WTC11 (cell line): ENCODE measurements at regions of chr16 and their contacts with region 1.

Region 1: DNA sequence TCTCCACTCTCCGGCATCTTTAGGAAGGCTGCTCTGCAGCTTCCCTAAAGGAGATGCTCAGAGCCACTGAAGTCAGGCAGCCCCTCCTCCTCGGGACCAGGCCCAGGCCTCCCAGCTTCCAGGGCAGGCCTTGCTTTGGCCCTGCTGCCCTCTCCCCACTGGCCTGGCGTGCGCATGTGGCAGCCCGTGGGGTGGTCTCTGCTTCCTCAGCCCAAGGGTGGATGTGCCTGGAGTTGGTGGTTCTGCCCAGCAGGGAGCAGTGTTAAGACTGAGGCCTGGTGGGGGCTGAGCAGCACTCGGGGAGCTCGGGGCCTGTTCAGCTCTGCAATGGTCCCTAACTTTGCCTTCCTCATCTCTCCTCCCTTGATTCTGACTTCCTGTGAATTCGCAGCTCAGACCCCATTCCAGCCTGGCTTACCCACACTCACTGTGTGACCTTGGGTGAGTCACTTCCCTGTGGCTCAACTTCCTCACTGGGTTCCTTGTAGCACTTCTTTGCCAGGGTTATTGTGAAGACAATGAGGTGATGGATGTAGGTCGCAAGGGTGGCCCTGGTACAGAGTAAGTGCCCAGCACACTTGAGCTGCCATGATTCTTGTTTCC is 63.2 kb downstream of the NKD1 start:
- DNase-seq: no peak
- ATAC-seq: no peak
- H3K4me3 Mint-ChIP-seq: no peak overlapping the region
- H3K27ac Mint-ChIP-seq: no peak overlapping the region
- H3K4me1 Mint-ChIP-seq: peaks cover 27% of the 10 kb centered on the region
- H3K27me3 Mint-ChIP-seq: no peaks in the 10 kb centered on the region
- CTCF ChIP-seq: no peak

Region 2: GRCh38 chr16:50627419-50627818 is 16.0 kb after region 1 on chr16:
- CTCF ChIA-PET with region 1: interaction called, 27 read pairs
- POLR2A ChIA-PET with region 1: interaction called, 3 read pairs
- DNase-seq: peak; percentile 42
- ATAC-seq: peak; percentile 89
- H3K4me3 Mint-ChIP-seq: no peak overlapping the region
- H3K27ac Mint-ChIP-seq: no peak overlapping the region
- H3K4me1 Mint-ChIP-seq: peaks cover 3% of the 10 kb centered on the region; the same call in 1 of the 2 replicates
- H3K27me3 Mint-ChIP-seq: no peaks in the 10 kb centered on the region
- CTCF ChIP-seq: no peak

Region 3: GRCh38 chr16:50719518-50720337 is 108.3 kb after region 1 on chr16:
- CTCF ChIA-PET with region 1: no interaction called
- POLR2A ChIA-PET with region 1: no interaction called
- DNase-seq: peak; percentile 29
- ATAC-seq: peak; percentile 85
- H3K4me3 Mint-ChIP-seq: no peak overlapping the region
- H3K27ac Mint-ChIP-seq: peak overlapping the region; percentile 41; the same call in 1 of the 2 replicates
- H3K4me1 Mint-ChIP-seq: peaks cover 12% of the 10 kb centered on the region
- H3K27me3 Mint-ChIP-seq: no peaks in the 10 kb centered on the region
- CTCF ChIP-seq: 0 out of 2 replicates have a peak, but pooled peaks have one; percentile 15

Region 4: GRCh38 chr16:50761267-50761666 is 149.8 kb after region 1 on chr16:
- CTCF ChIA-PET with region 1: no interaction called
- POLR2A ChIA-PET with region 1: no interaction called
- DNase-seq: no peak
- ATAC-seq: no peak
- H3K4me3 Mint-ChIP-seq: no peak overlapping the region
- H3K27ac Mint-ChIP-seq: no peak overlapping the region
- H3K4me1 Mint-ChIP-seq: peaks cover 12% of the 10 kb centered on the region
- H3K27me3 Mint-ChIP-seq: no peaks in the 10 kb centered on the region
- CTCF ChIP-seq: no peak